Left ventricle myocardium inferior (tissue), 1 donor: ENCODE measurements at regions of chr3 and their contacts with region 1.

Region 1: GRCh38 chr3:195259475-195260279 is 11.3 kb downstream of the XXYLT1 start:
- DNase-seq: peak; percentile 91
- H3K4me3 ChIP-seq: peak overlapping the region; percentile 79
- H3K27ac ChIP-seq: peak overlapping the region; percentile 94
- H3K4me1 ChIP-seq: peaks cover 32% of the 10 kb centered on the region
- H3K27me3 ChIP-seq: no peaks in the 10 kb centered on the region
- CTCF ChIP-seq: peak; percentile 88

Region 2: GRCh38 chr3:194986208-194987043 is 273.3 kb before region 1 on chr3:
- intact Hi-C with region 1: no loop called
- DNase-seq: no peak
- H3K4me3 ChIP-seq: no peak overlapping the region
- H3K27ac ChIP-seq: no peak overlapping the region
- H3K4me1 ChIP-seq: peaks cover 15% of the 10 kb centered on the region
- H3K27me3 ChIP-seq: no peaks in the 10 kb centered on the region
- CTCF ChIP-seq: no peak

Region 3: DNA sequence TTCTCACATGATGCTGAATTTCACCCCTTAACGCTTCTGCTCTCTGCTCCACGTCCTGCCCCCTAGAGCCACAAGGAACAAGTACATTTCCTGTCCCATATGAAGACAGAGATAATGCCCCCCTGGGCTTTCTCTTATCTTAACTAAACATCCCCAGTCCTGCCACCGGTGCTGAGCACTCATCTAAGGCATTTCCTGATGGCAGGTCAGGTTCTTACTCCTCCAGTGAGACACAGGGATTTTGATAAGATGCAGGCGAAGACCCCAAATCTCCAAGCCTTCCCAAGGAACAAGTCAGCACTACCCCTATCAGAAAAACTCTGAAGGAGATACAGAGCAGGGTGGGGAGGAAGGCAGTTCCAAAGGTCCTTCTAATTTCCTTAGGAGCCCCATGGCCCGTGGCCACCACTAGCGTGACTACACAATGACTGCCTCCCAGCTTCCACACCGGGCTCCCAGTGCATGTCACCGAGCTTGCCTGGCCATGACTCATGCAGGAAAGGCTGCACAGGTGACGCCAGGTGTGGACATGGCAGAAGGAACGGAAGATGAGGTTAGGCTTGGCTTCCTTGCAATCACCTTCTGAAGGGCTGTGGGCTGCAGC is 141.6 kb before region 1 on chr3:
- intact Hi-C with region 1: loop called (anchors 10 kb)
- DNase-seq: no peak
- H3K4me3 ChIP-seq: no peak overlapping the region
- H3K27ac ChIP-seq: peak overlapping the region; percentile 45
- H3K4me1 ChIP-seq: peaks cover 32% of the 10 kb centered on the region
- H3K27me3 ChIP-seq: no peaks in the 10 kb centered on the region
- CTCF ChIP-seq: peak; percentile 39